Vagina (tissue), 2 donors: ENCODE measurements at regions of chr2 and their contacts with region 1.

Region 1: DNA sequence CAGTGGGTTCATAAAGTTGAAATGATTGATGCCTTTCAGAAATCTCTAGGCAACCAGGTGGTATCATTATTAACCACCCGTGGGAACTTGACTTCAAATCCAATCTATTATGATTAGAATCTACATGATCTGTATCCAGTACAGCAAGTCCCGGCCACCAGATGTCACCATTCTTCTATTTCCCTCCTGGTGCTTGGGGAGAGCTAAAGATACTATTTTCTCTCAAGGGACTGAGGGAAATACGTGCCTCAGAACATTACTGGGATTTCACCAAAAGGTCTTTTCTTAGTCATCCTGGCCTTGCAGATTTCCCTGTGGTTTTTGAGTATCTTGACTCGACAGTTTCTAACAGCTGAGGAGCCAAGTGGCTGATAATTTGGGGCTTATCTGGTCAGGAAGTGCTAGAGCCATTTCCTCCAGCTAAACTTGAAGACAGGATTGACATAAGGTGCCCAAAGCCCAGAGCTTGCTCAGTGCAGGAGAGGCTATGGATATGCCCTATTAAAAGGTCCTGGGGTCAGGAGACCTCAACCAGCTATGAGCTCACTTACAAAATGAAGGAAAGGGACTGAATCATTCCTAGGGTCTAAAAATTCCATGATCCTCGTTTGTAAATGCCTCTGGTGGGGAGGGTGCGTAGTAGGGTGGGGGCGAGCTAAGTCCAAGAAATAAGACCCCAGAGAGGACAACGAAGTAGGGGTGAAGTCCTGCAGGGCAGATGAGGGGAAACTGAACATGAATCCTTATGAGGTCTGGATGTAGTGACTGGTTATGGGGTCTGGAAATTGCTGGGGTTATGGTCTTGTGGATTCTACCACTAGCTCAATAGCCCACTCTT is 135.4 kb upstream of the MGAT5 start:
- DNase-seq: peak in 1 of 2 donors; percentile 82
- H3K4me3 ChIP-seq: no peak overlapping the region
- H3K27ac ChIP-seq: peak overlapping the region; percentile 31
- H3K4me1 ChIP-seq: peaks cover 36% of the 10 kb centered on the region
- H3K27me3 ChIP-seq: no peaks in the 10 kb centered on the region
- CTCF ChIP-seq: peak; percentile 73 to 85 (median 84)
- POLR2A ChIP-seq: no peak

Region 2: GRCh38 chr2:133892352-133892913 is 226.1 kb before region 1 on chr2:
- intact Hi-C with region 1: no loop called
- DNase-seq: no peak
- H3K4me3 ChIP-seq: no peak overlapping the region
- H3K27ac ChIP-seq: no peak overlapping the region
- H3K4me1 ChIP-seq: no peaks in the 10 kb centered on the region
- H3K27me3 ChIP-seq: no peaks in the 10 kb centered on the region
- CTCF ChIP-seq: no peak
- POLR2A ChIP-seq: no peak

Region 3: GRCh38 chr2:134245340-134245984 is 127.0 kb after region 1 on chr2:
- intact Hi-C with region 1: loop called (anchors 5 kb)
- DNase-seq: no peak
- H3K4me3 ChIP-seq: no peak overlapping the region
- H3K27ac ChIP-seq: no peak overlapping the region
- H3K4me1 ChIP-seq: peaks cover 14% of the 10 kb centered on the region
- H3K27me3 ChIP-seq: no peaks in the 10 kb centered on the region
- CTCF ChIP-seq: peak in 2 of 3 experiments; percentile 5 to 43
- POLR2A ChIP-seq: no peak

Region 4: GRCh38 chr2:134411828-134412638 is 293.5 kb after region 1 on chr2:
- intact Hi-C with region 1: loop called (anchors 5 kb)
- DNase-seq: no peak
- H3K4me3 ChIP-seq: no peak overlapping the region
- H3K27ac ChIP-seq: no peak overlapping the region
- H3K4me1 ChIP-seq: peaks cover 27% of the 10 kb centered on the region
- H3K27me3 ChIP-seq: no peaks in the 10 kb centered on the region
- CTCF ChIP-seq: peak in 2 of 3 experiments; percentile 68 to 74
- POLR2A ChIP-seq: no peak